ENCODE measurements at regions of chrX and their contacts with region 1.

Region 1: GRCh38 chrX:15854712-15855567 is at the start of gene AP1S2:
- DNase-seq: peak; percentile 93
- ATAC-seq: peak; percentile 92
- H3K4me3 ChIP-seq: peak within 1 kb of the TSS; percentile 80
- H3K27ac ChIP-seq: peak within 1 kb of the TSS; percentile 70
- H3K4me1 ChIP-seq: peaks cover 36% of the 10 kb centered on the region
- H3K27me3 ChIP-seq: no peaks in the 10 kb centered on the region
- CTCF ChIP-seq: no peak
- total RNA-seq, gene AP1S2: 28.2 and 28.3 TPM in 2 replicates

Region 2: GRCh38 chrX:15749642-15750610 is 105.0 kb before region 1 on chrX:
- CTCF ChIA-PET with region 1: no interaction called
- POLR2A ChIA-PET with region 1: no interaction called
- intact Hi-C with region 1: loop called (anchors 1 kb)
- DNase-seq: no peak
- ATAC-seq: no peak
- H3K4me3 ChIP-seq: no peak overlapping the region
- H3K27ac ChIP-seq: peak overlapping the region; percentile 100
- H3K4me1 ChIP-seq: peaks cover 35% of the 10 kb centered on the region
- H3K27me3 ChIP-seq: no peaks in the 10 kb centered on the region
- CTCF ChIP-seq: no peak

Region 3: DNA sequence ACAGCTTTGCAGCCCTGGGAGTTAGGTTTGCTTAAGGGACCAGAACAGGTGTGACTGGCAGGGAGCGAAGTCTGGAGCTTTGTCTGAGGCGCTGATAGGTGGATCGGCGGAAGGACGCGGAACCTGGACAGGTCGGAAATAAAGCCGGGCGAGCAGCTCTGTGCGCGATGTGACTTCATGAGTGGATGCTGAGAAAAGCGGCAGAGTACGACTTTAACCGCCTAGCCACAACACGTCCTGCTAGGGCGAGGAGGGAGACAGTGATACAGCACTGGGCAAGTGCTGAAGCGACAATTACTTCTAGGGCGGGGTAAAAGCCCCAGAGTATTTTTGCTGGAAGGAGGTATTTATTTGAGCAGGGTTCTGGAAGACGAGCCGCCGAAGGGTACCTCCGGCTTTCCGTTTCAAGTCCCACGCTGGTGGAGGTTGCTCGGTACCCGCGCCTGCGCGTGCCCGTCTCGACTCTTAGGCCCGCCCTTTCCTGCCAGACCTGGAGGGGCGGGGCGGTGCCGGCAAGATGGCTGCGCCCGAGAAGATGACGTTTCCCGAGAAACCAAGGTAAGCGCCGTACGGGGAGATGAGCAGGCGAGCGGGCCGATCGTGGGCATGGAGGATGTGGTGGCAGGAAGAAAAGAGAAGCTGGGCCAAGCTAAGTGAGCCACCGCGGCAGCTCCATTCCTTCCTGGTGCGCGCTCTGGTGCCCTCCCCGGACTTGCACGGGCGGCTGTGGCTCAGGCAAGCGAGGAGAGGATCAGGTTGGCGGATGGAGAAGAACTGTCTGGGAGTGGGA is 64.8 kb before region 1 on chrX and contains the start of gene ZRSR2:
- CTCF ChIA-PET with region 1: no interaction called
- POLR2A ChIA-PET with region 1: no interaction called
- intact Hi-C with region 1: loop called (anchors 2 kb)
- DNase-seq: peak; percentile 82
- ATAC-seq: peak; percentile 91
- H3K4me3 ChIP-seq: peak within 1 kb of the TSS; percentile 98
- H3K27ac ChIP-seq: peak within 1 kb of the TSS; percentile 72
- H3K4me1 ChIP-seq: 0 out of 2 replicates have a peak, but pooled peaks cover 4% of the 10 kb centered on the region
- H3K27me3 ChIP-seq: no peaks in the 10 kb centered on the region
- CTCF ChIP-seq: no peak
- total RNA-seq, gene ZRSR2: 6.4 and 7.6 TPM in 2 replicates

Region 4: DNA sequence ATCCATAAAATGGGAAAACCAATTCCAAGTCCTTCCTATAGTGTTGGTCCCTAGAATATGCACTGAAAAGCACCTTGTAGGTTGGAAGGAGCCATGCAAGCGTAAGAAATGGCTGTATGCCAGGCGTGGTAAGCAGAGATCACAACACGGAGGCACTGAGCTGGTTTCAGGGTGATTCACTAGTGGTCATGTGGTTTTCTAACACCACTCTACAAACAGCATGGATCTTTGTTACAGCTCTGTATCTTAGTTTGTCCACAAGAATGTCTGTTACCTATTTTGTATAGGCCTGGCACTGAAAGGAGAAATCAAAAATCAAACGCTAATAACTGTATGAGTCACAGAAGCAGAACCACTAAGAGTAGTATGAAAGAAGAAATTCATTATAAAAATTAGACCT is 384.3 kb after region 1 on chrX:
- CTCF ChIA-PET with region 1: no interaction called
- POLR2A ChIA-PET with region 1: no interaction called
- intact Hi-C with region 1: no loop called
- DNase-seq: peak; percentile 88
- ATAC-seq: peak; percentile 98
- H3K4me3 ChIP-seq: no peak overlapping the region
- H3K27ac ChIP-seq: peak overlapping the region; percentile 67
- H3K4me1 ChIP-seq: peaks cover 21% of the 10 kb centered on the region
- H3K27me3 ChIP-seq: no peaks in the 10 kb centered on the region
- CTCF ChIP-seq: no peak

Region 5: GRCh38 chrX:16403808-16404207 is 548.9 kb after region 1 on chrX:
- CTCF ChIA-PET with region 1: no interaction called
- POLR2A ChIA-PET with region 1: no interaction called
- intact Hi-C with region 1: no loop called
- DNase-seq: no peak
- ATAC-seq: no peak
- H3K4me3 ChIP-seq: no peak overlapping the region
- H3K27ac ChIP-seq: no peak overlapping the region
- H3K4me1 ChIP-seq: no peaks in the 10 kb centered on the region
- H3K27me3 ChIP-seq: no peaks in the 10 kb centered on the region
- CTCF ChIP-seq: no peak

Region 6: DNA sequence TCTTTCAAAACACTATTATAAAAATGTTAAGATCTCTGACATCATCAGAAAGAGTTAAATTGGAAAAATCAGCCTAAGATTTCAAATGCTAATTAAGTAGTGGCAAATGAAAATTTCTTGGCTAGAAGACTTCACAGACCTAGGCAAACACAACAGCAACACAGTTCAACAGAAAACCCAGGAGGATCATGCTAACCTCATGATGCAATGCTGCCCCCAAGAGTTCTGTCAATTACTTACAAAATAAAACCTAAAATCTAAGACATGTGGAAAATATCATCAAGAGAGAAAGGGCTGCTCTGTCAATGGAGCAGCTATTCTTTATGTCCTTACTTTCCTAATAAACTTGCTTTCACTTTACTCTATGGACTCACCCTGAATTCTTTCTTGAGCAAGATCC is 816.1 kb after region 1 on chrX:
- CTCF ChIA-PET with region 1: no interaction called
- POLR2A ChIA-PET with region 1: no interaction called
- intact Hi-C with region 1: loop called (anchors 10 kb)
- DNase-seq: peak; percentile 59
- ATAC-seq: peak; percentile 77
- H3K4me3 ChIP-seq: no peak overlapping the region
- H3K27ac ChIP-seq: no peak overlapping the region
- H3K4me1 ChIP-seq: peaks cover 9% of the 10 kb centered on the region
- H3K27me3 ChIP-seq: no peaks in the 10 kb centered on the region
- CTCF ChIP-seq: peak; percentile 66

Measured in PC-3 (cell line).